ENCODE measurements at regions of chr6 and their contacts with region 1.

Region 1: GRCh38 chr6:28838634-28839442 is 84.9 kb downstream of the TRIM27 start:
- DNase-seq: peak; percentile 86 to 87
- H3K4me3 ChIP-seq: peak overlapping the region; percentile 29 to 58 (median 50)
- H3K27ac ChIP-seq: peak overlapping the region; percentile 35 to 76 (median 69)
- H3K4me1 ChIP-seq: peaks cover 0 to 7% of the 10 kb centered on the region in 2 donors
- H3K27me3 ChIP-seq: no peaks in the 10 kb centered on the region
- CTCF ChIP-seq: peak; percentile 19 to 52 (median 45)
- POLR2A ChIP-seq: no peak

Region 2: GRCh38 chr6:29016559-29017427 is 178.0 kb after region 1 on chr6:
- intact Hi-C with region 1: loop called (anchors 2 kb)
- DNase-seq: peak; percentile 83 to 88
- H3K4me3 ChIP-seq: peak overlapping the region in 2 of 3 donors; percentile 32 to 53
- H3K27ac ChIP-seq: no peak overlapping the region
- H3K4me1 ChIP-seq: peaks cover 3 to 7% of the 10 kb centered on the region in 2 donors
- H3K27me3 ChIP-seq: no peaks in the 10 kb centered on the region
- CTCF ChIP-seq: peak; percentile 55 to 81 (median 74)
- POLR2A ChIP-seq: no peak

Measured in thyroid gland (tissue), 4 donors.